K562 (cell line): ENCODE measurements at regions of chr2 and their contacts with region 1.

Region 1: DNA sequence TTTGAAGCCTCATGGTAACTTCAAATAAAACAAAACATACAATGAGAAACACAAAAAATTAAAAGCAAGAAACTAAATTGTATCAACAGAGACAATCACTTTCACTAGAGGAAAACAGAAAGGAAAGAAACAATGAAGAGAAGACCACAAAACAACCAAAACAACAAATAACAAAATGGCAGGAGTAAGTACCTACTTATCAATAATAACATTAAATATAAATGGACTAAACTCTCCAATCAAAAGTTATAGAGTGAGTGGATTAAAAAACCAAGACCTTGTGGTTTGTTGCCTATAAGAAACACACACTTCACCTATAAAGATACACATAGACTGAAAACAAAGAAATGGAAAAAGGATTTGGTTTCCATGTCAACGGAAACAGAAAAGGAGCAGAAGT is 830.1 kb upstream of the TMEFF2 start:
- DNase-seq: no peak
- ATAC-seq: no peak
- H3K4me3 ChIP-seq: no peak overlapping the region
- H3K27ac ChIP-seq: no peak overlapping the region
- H3K4me1 ChIP-seq: no peaks in the 10 kb centered on the region
- H3K27me3 ChIP-seq: no peaks in the 10 kb centered on the region
- CTCF ChIP-seq: no peak
- EP300 ChIP-seq: no peak
- POLR2A ChIP-seq: no peak
- RAD21 ChIP-seq: no peak

Region 2: GRCh38 chr2:192194866-192195547 is 829.8 kb before region 1 on chr2 and contains the start of gene TMEFF2:
- CTCF ChIA-PET with region 1: no interaction called
- POLR2A ChIA-PET with region 1: no interaction called
- in situ Hi-C with region 1: loop called (anchors 25 kb)
- intact Hi-C with region 1: no loop called
- DNase-seq: peak; percentile 30 to 63 (median 52)
- ATAC-seq: peak; percentile 82
- H3K4me3 ChIP-seq: no peak within 1 kb of the TSS
- H3K27ac ChIP-seq: no peak within 1 kb of the TSS
- H3K4me1 ChIP-seq: peaks cover 0 to 18% of the 10 kb centered on the region in 2 experiments; a peak in 2 of 5 replicates
- H3K27me3 ChIP-seq: peaks cover 14 to 33% of the 10 kb centered on the region in 2 experiments
- CTCF ChIP-seq: no peak
- EP300 ChIP-seq: no peak
- POLR2A ChIP-seq: no peak
- RAD21 ChIP-seq: no peak
- polyA plus RNA-seq, gene TMEFF2: 1.4 TPM in 1 of 2 experiments, not detected in the other

Region 3: DNA sequence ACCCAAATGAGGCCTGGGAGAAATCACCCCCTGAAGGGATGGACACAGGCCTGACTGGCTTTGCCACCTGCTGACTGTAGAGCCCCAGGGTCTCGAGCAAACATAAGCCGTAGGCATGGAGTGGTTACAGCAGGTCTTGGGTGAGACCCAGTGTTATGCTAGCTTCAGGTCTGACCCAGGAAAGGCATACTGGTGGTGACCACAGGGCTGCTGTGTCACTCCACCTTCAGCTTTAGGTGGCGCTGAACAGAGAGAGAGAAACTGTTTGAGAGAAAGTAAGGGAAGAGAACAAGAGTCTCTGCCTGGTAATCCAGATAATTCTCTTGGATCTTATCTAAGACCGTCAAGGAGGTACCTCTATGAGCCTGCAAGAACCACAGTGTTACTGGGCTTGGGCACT is 714.1 kb after region 1 on chr2:
- CTCF ChIA-PET with region 1: no interaction called
- POLR2A ChIA-PET with region 1: no interaction called
- in situ Hi-C with region 1: no loop called
- intact Hi-C with region 1: no loop called
- DNase-seq: no peak
- ATAC-seq: no peak
- H3K4me3 ChIP-seq: no peak overlapping the region
- H3K27ac ChIP-seq: no peak overlapping the region
- H3K4me1 ChIP-seq: no peaks in the 10 kb centered on the region
- H3K27me3 ChIP-seq: no peaks in the 10 kb centered on the region
- CTCF ChIP-seq: no peak
- EP300 ChIP-seq: no peak
- POLR2A ChIP-seq: no peak
- RAD21 ChIP-seq: no peak